ENCODE measurements at regions of chr17 and their contacts with region 1.

Region 1: DNA sequence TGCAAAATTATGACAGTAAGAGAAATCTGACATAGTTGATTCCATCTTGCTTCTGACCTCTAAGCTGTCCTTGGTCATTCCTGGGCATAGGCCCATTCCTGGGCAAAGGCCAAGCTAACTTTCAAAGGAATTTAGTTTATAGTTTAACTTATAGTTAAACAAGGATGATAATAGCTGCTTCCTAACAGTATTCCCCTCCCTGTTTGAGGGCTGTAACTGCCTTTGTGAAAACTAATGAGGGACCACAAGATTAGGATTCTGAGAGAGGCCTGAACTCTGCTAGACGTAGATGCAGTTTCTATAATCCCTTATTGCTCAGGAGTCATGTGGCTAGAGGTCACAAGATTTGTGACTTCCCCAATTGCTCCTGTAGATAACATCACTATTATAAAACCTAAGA is 80.2 kb upstream of the ASIC2 start:
- DNase-seq: peak; percentile 33 to 53
- H3K4me3 ChIP-seq: no peak overlapping the region
- H3K4me3 Mint-ChIP-seq: no peak overlapping the region
- H3K27ac Mint-ChIP-seq: no peak overlapping the region
- H3K4me1 ChIP-seq: peaks cover 62% of the 10 kb centered on the region
- H3K4me1 Mint-ChIP-seq: peaks cover 28% of the 10 kb centered on the region
- H3K27me3 ChIP-seq: no peaks in the 10 kb centered on the region
- H3K27me3 Mint-ChIP-seq: no peaks in the 10 kb centered on the region
- CTCF ChIP-seq: no peak

Region 2: GRCh38 chr17:33389504-33390135 is 16.3 kb after region 1 on chr17:
- CTCF ChIA-PET with region 1: no interaction called
- POLR2A ChIA-PET with region 1: no interaction called
- intact Hi-C with region 1: loop called (anchors 1 kb)
- DNase-seq: no peak
- H3K4me3 ChIP-seq: no peak overlapping the region
- H3K4me3 Mint-ChIP-seq: no peak overlapping the region
- H3K27ac Mint-ChIP-seq: peak overlapping the region; percentile 32
- H3K4me1 ChIP-seq: peaks cover 45% of the 10 kb centered on the region
- H3K4me1 Mint-ChIP-seq: peaks cover 32% of the 10 kb centered on the region
- H3K27me3 ChIP-seq: no peaks in the 10 kb centered on the region
- H3K27me3 Mint-ChIP-seq: peaks cover 6% of the 10 kb centered on the region
- CTCF ChIP-seq: no peak